ENCODE measurements at regions of chr5 and their contacts with region 1.

Region 1: DNA sequence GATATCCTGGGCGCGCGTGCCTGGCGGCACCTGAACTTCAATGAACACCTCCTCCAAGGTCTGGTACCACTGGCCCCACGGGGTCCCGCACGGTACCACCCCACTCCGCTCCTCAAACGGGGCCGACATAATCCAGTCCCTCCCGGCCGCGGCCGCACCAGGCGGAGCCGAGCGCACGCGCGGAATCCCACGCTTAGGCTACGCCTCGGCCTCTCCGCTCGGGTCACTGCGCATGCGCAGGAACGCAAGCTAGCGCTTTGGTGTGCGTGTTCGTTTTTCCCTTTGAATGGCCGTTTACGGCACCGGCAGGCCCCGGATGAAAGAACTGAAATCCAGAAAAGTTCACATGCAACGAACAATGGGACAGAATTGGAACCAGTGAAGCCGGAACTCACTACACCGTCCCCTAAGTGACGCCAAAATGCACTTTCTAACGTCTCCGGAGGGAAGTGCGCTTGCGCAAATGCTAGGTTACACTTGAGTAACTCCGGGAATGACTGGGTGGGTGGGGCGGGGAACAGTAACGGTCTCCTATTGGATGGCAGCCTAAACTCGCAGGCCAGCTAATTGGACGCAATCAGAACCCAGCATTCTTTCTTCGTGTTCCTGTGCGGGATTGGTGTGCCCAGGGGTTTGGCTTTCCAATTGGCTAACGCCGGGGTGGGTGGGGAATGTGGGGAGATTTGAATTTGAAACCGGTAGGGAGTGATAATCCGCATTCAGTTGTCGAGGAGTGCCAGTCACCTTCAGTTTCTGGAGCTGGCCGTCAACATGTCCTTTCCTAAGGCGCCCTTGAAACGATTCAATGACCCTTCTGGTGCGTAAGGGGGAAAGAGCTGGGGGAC is at the starts of genes HMMR and NUDCD2:
- DNase-seq: peak; percentile 98
- ATAC-seq: peak; percentile 87
- H3K4me3 ChIP-seq: peak within 1 kb of the TSS; percentile 87 to 95 (median 90)
- H3K4me3 Mint-ChIP-seq: peak within 1 kb of the TSS; percentile 91
- H3K27ac ChIP-seq: peak within 1 kb of the TSS; percentile 92
- H3K27ac Mint-ChIP-seq: peak within 1 kb of the TSS; percentile 99
- H3K4me1 ChIP-seq: peaks cover 17 to 32% of the 10 kb centered on the region in 2 donors
- H3K4me1 Mint-ChIP-seq: peaks cover 32% of the 10 kb centered on the region
- H3K27me3 ChIP-seq: no peaks in the 10 kb centered on the region
- H3K27me3 Mint-ChIP-seq: no peaks in the 10 kb centered on the region
- CTCF ChIP-seq: peak; percentile 3
- total RNA-seq, gene HMMR: 1.4 and 1.6 TPM in 2 replicates
- total RNA-seq, gene NUDCD2: 24.4 TPM in 2 replicates

Region 2: DNA sequence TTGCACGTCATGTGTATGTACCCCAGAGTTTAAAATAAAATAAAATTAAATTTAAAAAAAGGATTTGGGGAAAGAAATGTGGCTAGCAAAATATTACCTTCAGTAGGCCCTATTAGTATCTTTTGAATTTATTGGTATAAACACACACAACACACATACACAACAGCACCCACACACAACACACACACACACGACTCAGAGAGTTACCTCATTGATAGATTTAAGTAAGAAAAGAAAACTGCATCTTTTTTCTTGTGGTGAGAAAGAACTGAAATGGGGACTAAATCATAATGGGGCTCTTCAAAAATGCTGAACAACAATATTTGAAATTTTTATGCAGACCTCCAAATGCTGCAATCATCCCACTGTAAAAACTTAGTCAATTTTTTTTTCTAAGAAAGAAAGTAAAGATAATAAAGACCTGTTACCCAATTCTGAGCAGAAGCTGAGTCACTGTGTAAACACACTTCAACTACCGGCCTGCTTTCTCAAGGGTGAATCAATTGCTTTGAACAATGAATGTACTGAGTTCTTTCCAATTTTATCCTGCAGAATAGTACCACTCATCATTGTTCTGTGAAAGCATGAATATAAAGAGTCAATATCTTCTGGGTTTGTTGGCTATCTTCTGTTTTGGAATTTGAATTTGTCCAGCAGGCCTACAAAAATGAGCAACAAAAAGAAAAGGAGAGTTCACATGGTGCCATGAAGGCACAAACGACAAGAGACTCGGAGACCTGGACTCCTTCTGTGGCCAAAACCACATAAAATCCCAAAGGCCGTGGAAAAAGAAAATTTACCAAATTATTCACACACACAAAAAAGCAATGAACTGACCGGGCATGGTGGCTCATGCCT is 80.6 kb before region 1 on chr5:
- CTCF ChIA-PET with region 1: no interaction called
- POLR2A ChIA-PET with region 1: no interaction called
- intact Hi-C with region 1: no loop called
- DNase-seq: no peak
- ATAC-seq: no peak
- H3K4me3 ChIP-seq: no peak overlapping the region
- H3K4me3 Mint-ChIP-seq: no peak overlapping the region
- H3K27ac ChIP-seq: no peak overlapping the region
- H3K27ac Mint-ChIP-seq: no peak overlapping the region
- H3K4me1 ChIP-seq: no peaks in the 10 kb centered on the region
- H3K4me1 Mint-ChIP-seq: no peaks in the 10 kb centered on the region
- H3K27me3 ChIP-seq: peaks cover 0 to 3% (median 0%) of the 10 kb centered on the region in 4 experiments
- H3K27me3 Mint-ChIP-seq: peaks cover 15% of the 10 kb centered on the region
- CTCF ChIP-seq: no peak

Region 3: DNA sequence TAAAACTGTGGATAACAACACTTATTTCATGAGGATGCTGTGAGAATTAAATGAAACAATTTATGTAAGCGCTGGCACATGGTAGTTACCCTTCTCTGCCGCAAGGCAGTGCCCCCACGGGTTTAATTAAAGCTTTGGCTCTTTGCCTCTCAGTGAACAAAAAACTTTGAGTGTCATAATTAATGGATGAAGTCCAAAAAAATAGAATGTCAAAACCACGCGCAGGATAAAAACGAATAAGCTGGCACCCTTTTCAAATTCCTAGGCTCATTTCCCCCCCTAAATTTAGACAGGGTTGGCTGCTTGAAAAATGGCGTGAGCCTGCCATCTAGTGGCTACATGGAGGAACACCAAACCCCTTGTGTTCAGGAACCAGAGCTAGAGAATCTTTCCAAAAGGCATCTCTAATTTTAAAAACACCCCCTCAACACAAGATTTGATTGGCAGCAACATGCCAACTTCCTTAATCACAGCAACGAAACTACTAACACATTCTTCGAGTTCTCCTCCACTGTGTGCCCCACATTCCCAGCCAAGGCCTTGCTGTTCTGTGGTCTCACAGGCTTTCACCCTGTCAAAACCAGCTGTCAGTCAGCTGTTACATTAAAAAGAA is 51.7 kb before region 1 on chr5:
- CTCF ChIA-PET with region 1: interaction called, 12 read pairs
- POLR2A ChIA-PET with region 1: no interaction called
- intact Hi-C with region 1: no loop called
- DNase-seq: peak; percentile 71
- ATAC-seq: peak; percentile 90
- H3K4me3 ChIP-seq: no peak overlapping the region
- H3K4me3 Mint-ChIP-seq: no peak overlapping the region
- H3K27ac ChIP-seq: no peak overlapping the region
- H3K27ac Mint-ChIP-seq: no peak overlapping the region
- H3K4me1 ChIP-seq: peaks cover 0 to 3% of the 10 kb centered on the region in 2 donors
- H3K4me1 Mint-ChIP-seq: peaks cover 2% of the 10 kb centered on the region
- H3K27me3 ChIP-seq: no peaks in the 10 kb centered on the region
- H3K27me3 Mint-ChIP-seq: peaks cover 16% of the 10 kb centered on the region
- CTCF ChIP-seq: peak; percentile 96

Region 4: GRCh38 chr5:163437309-163438182 is 22.6 kb before region 1 on chr5 and contains the start of gene CCNG1:
- CTCF ChIA-PET with region 1: interaction called, 49 read pairs
- POLR2A ChIA-PET with region 1: interaction called, 20 read pairs
- intact Hi-C with region 1: loop called (anchors 1 kb)
- DNase-seq: peak; percentile 94
- ATAC-seq: peak; percentile 97
- H3K4me3 ChIP-seq: peak within 1 kb of the TSS; percentile 55 to 95 (median 83)
- H3K4me3 Mint-ChIP-seq: peak within 1 kb of the TSS; percentile 87
- H3K27ac ChIP-seq: peak within 1 kb of the TSS; percentile 54 to 90
- H3K27ac Mint-ChIP-seq: peak within 1 kb of the TSS; percentile 93
- H3K4me1 ChIP-seq: peaks cover 15 to 23% of the 10 kb centered on the region in 2 donors
- H3K4me1 Mint-ChIP-seq: peaks cover 35% of the 10 kb centered on the region
- H3K27me3 ChIP-seq: no peaks in the 10 kb centered on the region
- H3K27me3 Mint-ChIP-seq: no peaks in the 10 kb centered on the region
- CTCF ChIP-seq: no peak
- total RNA-seq, gene CCNG1: 80.1 and 95.1 TPM in 2 replicates

Region 5: DNA sequence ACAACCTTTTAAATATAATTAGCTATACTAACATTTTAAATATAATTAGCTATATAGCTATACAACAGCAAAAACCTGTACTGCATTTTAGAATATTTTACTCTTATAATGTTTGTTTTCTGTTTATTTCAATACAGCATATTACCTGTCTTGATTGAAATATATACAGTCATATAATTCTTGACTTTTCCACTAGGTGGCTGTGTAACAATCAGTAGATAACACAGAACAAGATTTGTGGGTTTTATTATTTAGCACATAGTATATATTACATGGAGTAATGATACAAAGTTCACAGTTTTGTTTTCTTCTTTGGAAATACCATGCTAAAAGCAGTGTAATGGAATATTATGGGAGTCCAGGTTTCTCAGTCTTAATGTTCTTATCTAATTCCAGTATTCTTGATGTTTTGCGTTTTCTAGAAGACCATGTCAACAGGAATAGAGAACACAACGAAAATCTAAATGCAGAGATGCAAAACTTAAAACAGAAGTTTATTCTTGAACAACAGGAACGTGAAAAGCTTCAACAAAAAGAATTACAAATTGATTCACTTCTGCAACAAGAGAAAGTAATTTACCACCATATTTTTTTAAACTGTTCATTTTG is 13.6 kb after region 1 on chr5:
- CTCF ChIA-PET with region 1: interaction called, 50 read pairs
- POLR2A ChIA-PET with region 1: no interaction called
- intact Hi-C with region 1: no loop called
- DNase-seq: peak; percentile 47
- ATAC-seq: peak; percentile 78
- H3K4me3 ChIP-seq: no peak overlapping the region
- H3K4me3 Mint-ChIP-seq: no peak overlapping the region
- H3K27ac ChIP-seq: no peak overlapping the region
- H3K27ac Mint-ChIP-seq: no peak overlapping the region
- H3K4me1 ChIP-seq: no peaks in the 10 kb centered on the region
- H3K4me1 Mint-ChIP-seq: no peaks in the 10 kb centered on the region
- H3K27me3 ChIP-seq: no peaks in the 10 kb centered on the region
- H3K27me3 Mint-ChIP-seq: no peaks in the 10 kb centered on the region
- CTCF ChIP-seq: peak; percentile 69

Region 6: DNA sequence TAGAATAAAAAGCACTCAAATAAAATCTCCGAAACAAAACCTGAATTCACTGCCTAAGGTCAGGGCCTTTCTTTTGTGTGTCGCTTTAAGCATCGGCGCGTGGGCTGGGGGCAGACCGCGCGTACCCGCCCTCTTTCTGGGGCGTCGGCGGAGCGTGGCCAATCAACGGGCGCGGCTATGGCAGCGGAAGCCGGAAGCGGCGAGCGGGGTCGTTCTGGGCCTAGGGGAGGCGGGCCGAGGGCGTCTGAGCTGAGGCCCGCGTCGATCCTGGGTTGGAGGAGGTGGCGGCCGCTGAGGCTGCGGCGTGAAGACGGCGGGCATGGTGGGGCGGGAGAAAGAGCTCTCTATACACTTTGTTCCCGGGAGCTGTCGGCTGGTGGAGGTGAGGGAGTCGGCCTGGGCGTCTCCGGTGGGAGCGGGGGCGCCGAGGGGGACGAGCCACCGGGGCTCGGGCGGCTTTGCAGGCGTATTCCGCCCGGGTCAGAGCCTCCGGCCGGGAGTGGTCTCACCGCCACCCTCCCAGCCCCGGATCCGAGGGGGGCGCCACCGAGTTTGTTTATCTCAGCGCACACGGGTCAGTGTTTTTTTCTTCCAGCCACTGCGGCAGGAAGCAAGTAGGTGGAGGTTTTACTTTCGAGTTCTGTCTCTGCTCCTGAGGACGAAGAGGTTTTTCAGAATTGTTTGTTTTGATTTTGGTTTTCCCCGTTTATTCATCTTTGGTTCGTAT is 45.4 kb after region 1 on chr5 and contains the start of gene MAT2B:
- CTCF ChIA-PET with region 1: interaction called, 37 read pairs
- POLR2A ChIA-PET with region 1: interaction called, 40 read pairs
- intact Hi-C with region 1: loop called (anchors 1 kb)
- DNase-seq: peak; percentile 97
- ATAC-seq: peak; percentile 88
- H3K4me3 ChIP-seq: peak within 1 kb of the TSS; percentile 61 to 99 (median 83)
- H3K4me3 Mint-ChIP-seq: peak within 1 kb of the TSS; percentile 98
- H3K27ac ChIP-seq: peak within 1 kb of the TSS; percentile 93 to 95
- H3K27ac Mint-ChIP-seq: peak within 1 kb of the TSS; percentile 98
- H3K4me1 ChIP-seq: peaks cover 47 to 60% of the 10 kb centered on the region in 2 donors
- H3K4me1 Mint-ChIP-seq: peaks cover 61% of the 10 kb centered on the region
- H3K27me3 ChIP-seq: no peaks in the 10 kb centered on the region
- H3K27me3 Mint-ChIP-seq: no peaks in the 10 kb centered on the region
- CTCF ChIP-seq: peak; percentile 76
- total RNA-seq, gene MAT2B: 117 and 123 TPM in 2 replicates

Region 7: DNA sequence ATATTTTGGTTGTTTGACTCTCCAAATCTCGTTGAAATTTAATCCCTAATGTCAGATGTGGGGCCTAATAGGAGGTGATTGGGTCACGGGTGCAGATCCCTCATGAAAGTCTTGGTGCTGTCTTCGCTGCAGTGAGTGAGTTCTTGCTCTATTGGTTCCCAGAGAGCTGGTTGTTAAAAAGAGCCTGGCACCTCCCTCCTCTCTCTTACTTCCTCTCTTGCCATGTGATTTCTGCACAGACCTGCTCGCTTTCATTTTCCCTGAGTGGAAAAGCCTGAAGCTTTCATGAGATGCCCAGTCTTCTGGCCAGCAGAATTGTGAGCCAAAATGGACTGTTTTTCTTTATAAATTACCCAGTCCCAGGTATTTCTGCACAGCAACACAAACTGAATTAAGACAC is 266.9 kb after region 1 on chr5:
- CTCF ChIA-PET with region 1: no interaction called
- POLR2A ChIA-PET with region 1: no interaction called
- intact Hi-C with region 1: loop called (anchors 5 kb)
- DNase-seq: peak; percentile 68
- ATAC-seq: peak; percentile 97
- H3K4me3 ChIP-seq: peak overlapping the region in 4 of 5 experiments; percentile 12 to 58 (median 40)
- H3K4me3 Mint-ChIP-seq: peak overlapping the region; percentile 49
- H3K27ac ChIP-seq: peak overlapping the region; percentile 37 to 48
- H3K27ac Mint-ChIP-seq: peak overlapping the region; percentile 80
- H3K4me1 ChIP-seq: peaks cover 8 to 16% of the 10 kb centered on the region in 2 donors
- H3K4me1 Mint-ChIP-seq: peaks cover 34% of the 10 kb centered on the region
- H3K27me3 ChIP-seq: no peaks in the 10 kb centered on the region
- H3K27me3 Mint-ChIP-seq: no peaks in the 10 kb centered on the region
- CTCF ChIP-seq: no peak

Region 8: DNA sequence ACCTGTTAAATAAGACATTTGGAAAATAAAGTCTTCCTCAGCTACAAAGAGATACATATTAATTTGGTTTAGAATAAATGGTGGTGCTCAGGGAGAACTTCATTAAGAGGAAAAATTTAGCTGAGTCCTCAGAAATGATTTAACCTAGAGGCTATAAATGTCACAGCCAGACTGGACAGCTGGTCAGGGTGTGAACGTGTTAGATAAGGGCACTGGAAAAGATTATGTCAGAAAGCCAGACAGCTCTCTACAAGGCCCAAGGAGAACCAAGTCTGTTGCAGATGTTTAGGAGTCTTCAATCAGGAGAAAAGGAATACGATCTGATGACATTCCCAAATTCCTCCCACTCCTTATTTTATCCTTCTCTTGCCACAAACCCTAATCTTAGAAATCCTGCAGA is 310.5 kb after region 1 on chr5:
- CTCF ChIA-PET with region 1: no interaction called
- POLR2A ChIA-PET with region 1: no interaction called
- intact Hi-C with region 1: no loop called
- DNase-seq: no peak
- ATAC-seq: no peak
- H3K4me3 ChIP-seq: no peak overlapping the region
- H3K4me3 Mint-ChIP-seq: no peak overlapping the region
- H3K27ac ChIP-seq: no peak overlapping the region
- H3K27ac Mint-ChIP-seq: no peak overlapping the region
- H3K4me1 ChIP-seq: no peaks in the 10 kb centered on the region
- H3K4me1 Mint-ChIP-seq: no peaks in the 10 kb centered on the region
- H3K27me3 ChIP-seq: no peaks in the 10 kb centered on the region
- H3K27me3 Mint-ChIP-seq: peaks cover 4% of the 10 kb centered on the region
- CTCF ChIP-seq: no peak

Measured in B cell (primary cell).